Common myeloid progenitor, CD34-positive (primary cell): ENCODE measurements at regions of chr9 and their contacts with region 1.

Region 1: DNA sequence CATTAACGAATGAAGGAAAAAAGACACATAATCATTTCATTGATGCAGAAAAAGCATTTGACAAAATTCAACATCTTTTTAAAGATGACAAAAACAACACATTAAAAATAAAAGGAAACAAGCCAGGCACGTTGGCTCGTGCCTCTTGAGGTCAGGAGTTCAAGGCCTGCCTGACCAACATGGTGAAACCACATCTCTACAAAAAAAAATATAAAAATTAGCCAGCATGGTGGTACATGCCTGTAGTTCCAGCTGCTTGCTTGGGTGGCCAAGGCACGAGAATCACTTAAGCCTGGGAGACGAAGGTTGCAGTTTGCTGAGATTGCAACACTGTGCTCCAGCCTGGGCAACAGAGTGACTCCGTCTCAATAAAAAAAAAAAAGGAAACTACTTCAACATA is 77.0 kb downstream of the ERCC6L2 start:
- DNase-seq: no peak
- H3K4me3 ChIP-seq: no peak overlapping the region
- H3K27ac ChIP-seq: no peak overlapping the region
- H3K4me1 ChIP-seq: no peaks in the 10 kb centered on the region
- H3K27me3 ChIP-seq: no peaks in the 10 kb centered on the region

Region 2: GRCh38 chr9:95752129-95752731 is 200.2 kb before region 1 on chr9:
- CTCF ChIA-PET with region 1: no interaction called
- POLR2A ChIA-PET with region 1: interaction called, 13 read pairs
- DNase-seq: no peak
- H3K4me3 ChIP-seq: no peak overlapping the region
- H3K27ac ChIP-seq: no peak overlapping the region
- H3K4me1 ChIP-seq: peaks cover 0 to 5% (median 0%) of the 10 kb centered on the region in 4 experiments
- H3K27me3 ChIP-seq: peaks cover 0 to 26% (median 15%) of the 10 kb centered on the region in 5 experiments

Region 3: DNA sequence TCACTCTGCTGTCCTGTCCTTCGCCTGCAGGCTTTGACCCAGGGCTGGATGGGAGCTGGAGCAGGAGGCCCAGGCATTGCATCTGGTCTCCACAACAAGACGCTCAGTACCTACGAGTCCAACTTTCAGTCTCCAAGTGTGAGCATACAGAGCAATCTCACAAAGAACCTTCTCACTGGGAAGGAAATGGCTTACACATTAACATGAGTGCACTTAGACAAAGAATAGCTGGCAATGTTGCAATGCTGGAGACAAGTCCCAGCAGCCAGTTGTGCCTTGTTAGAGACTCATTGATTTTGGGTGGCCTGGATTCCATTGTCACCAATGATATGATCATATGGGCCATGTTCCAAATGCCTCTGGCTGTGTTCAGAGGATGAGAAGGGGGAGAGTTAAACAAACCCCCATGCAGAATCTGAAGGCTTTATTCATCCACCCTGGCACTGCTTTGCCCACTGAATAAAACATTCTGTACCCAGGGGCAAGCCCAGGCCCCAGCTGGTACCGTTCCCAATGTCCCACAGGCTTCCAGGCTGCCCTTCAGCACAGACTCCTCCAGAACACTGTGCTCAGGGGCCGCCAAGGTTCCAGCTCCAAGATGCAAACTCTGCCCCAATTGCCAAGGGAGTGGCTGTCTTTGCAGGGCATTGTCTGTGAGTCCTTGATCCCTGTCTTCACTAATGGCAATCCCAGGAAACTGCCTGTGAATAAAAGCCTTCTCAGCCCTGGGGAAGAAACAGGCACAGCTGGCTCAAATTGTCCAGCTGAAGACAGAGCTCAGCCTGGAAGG is 164.0 kb after region 1 on chr9:
- CTCF ChIA-PET with region 1: no interaction called
- POLR2A ChIA-PET with region 1: no interaction called
- DNase-seq: no peak
- H3K4me3 ChIP-seq: no peak overlapping the region
- H3K27ac ChIP-seq: no peak overlapping the region
- H3K4me1 ChIP-seq: peaks cover 0 to 19% (median 8%) of the 10 kb centered on the region in 4 experiments
- H3K27me3 ChIP-seq: no peaks in the 10 kb centered on the region